Panc1 (cell line): ENCODE measurements at regions of chr1 and their contacts with region 1.

Region 1: GRCh38 chr1:147389532-147390524 is 147.3 kb downstream of the CHD1L start:
- DNase-seq: peak; percentile 20
- ATAC-seq: peak; percentile 86
- H3K4me3 ChIP-seq: no peak overlapping the region
- H3K27ac ChIP-seq: no peak overlapping the region
- H3K4me1 ChIP-seq: no peaks in the 10 kb centered on the region
- H3K27me3 ChIP-seq: no peaks in the 10 kb centered on the region
- CTCF ChIP-seq: peak; percentile 87

Region 2: DNA sequence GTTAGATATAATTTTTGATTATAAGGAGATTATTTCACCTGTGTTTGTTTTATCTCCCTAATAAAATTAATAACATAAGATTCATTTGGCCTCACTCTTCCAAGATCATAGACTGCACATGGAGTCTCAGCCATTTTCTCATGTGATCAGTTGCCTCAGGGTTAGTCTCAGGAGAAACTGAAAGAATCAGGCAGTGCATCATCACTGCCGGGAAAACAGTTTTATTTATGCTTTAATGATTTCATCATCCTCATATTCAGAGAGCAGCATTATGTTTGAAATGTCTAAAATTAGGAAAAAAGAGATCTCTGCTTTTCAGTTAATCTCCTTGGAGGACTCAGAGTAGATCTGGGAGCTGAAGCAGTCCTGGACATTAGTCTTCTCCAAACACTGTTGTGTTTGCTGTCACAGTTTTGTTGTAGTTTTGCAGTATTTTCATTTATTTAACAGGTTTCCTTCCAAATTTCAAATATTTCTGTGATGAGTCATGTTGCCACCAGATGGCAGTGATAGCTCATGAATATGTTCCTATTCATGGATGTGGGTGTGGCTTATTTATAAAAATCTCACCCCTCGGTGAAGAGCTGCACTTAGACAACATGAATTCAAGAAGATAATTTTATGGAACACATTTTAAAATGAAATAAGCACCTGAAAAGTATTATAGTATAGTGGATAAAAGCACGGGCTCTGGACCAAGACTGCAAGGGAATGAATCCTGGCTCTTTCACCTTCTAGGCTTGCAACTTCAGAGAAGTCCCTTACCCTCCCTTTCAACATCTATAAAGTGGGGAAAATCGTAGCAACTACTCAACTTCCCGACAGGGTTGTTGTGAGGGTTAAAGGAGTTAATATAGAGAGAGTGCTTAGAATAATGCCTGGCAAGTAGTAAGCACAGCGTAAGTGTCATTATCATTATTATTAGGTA is 116.2 kb before region 1 on chr1:
- CTCF ChIA-PET with region 1: interaction called, 8 read pairs
- POLR2A ChIA-PET with region 1: interaction called, 3 read pairs
- in situ Hi-C with region 1: no loop called
- intact Hi-C with region 1: loop called (anchors 5 kb)
- DNase-seq: peak; percentile 27
- ATAC-seq: no peak
- H3K4me3 ChIP-seq: no peak overlapping the region
- H3K27ac ChIP-seq: no peak overlapping the region
- H3K4me1 ChIP-seq: peaks cover 4% of the 10 kb centered on the region; the same call in 1 of the 2 replicates
- H3K27me3 ChIP-seq: no peaks in the 10 kb centered on the region
- CTCF ChIP-seq: peak; percentile 55; the same call in 1 of the 2 replicates